ENCODE measurements at regions of chr17 and their contacts with region 1.

Region 1: GRCh38 chr17:38824899-38825761 is at the start of gene CWC25:
- DNase-seq: peak; percentile 98
- ATAC-seq: peak; percentile 96
- total RNA-seq, gene CWC25: 7.6 TPM

Region 2: GRCh38 chr17:38848557-38848891 is 23.4 kb after region 1 on chr17:
- intact Hi-C with region 1: loop called (anchors 2 kb)
- DNase-seq: no peak
- ATAC-seq: no peak

Region 3: DNA sequence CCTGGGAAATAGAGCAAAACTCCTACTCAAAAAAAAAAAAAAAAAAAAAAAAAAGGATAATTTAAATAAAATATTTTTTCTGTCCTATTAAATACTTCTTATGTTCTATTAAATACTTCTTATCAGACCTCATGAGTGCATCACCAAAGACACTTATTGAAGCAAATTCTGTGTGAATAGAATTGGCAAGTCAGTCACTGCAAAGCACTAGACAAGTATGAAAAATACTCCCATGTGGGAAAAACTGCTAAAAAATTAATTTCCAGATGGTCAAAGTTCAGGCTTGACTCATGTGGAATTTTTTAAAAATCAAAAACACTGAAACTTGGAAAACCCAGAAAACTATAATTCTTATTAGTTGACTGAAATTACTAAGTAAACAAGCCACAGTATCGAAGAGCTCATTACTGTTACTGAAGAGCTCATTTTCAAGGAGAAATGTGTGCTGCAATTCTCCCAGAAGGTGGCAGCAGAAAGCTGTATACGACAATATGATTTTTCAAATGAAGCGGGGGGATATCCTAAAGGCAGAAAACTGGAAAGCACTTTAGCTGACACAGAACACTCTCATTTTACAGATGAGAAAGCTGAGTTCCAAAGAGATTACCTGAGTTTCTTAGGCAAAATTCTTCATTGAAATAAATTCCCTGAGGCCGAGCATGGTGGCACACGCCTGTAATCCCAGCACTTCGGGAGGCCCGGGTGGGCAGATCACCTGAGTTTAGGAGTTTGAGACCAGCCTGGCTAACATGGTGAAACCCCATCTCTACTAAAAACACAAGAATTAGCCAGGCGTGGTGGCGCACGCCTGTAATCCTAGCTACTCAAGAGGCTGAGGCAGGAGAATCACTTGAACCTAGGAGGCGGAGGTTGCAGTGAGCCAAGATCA is 158.0 kb after region 1 on chr17:
- intact Hi-C with region 1: no loop called
- DNase-seq: no peak
- ATAC-seq: peak; percentile 77